Naive thymus-derived CD4-positive, alpha-beta T cell (primary cell): ENCODE measurements at regions of chr12 and their contacts with region 1.

Region 1: DNA sequence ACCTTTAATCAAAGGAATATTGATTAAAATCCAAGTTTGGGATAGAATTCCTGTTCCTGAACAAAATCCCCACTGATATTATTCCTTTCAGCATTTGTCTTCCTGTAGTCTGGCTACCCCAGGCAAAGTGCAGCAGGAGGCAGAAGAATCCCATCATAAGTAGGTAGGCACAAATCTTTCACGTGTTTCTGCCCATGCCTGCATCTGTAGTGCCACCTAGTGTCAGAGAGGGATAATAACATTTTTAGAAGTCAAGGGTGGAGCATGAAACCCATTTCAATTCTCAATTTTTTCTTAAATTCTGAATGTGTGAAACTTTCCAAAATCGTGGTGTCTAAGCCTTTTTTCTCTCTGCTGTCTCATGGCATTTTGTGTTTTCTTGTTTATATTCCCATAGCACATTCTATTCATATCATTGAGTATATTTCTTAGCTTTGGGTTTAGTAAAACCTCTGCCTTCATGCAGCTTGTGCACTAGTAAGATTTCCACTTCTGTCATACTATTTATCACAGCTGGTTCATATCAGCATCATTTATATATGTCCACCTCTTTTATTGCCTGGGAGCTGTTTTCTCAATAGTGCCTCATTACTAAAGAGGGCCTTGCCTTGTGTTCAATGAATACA is 47.8 kb upstream of the RERG start:
- DNase-seq: peak in 7 of 9 donors; percentile 28 to 65 (median 56)
- ATAC-seq: peak; percentile 79
- H3K4me3 ChIP-seq: no peak overlapping the region
- H3K4me3 Mint-ChIP-seq: no peak overlapping the region
- H3K27ac ChIP-seq: no peak overlapping the region
- H3K27ac Mint-ChIP-seq: no peak overlapping the region
- H3K4me1 ChIP-seq: no peaks in the 10 kb centered on the region
- H3K4me1 Mint-ChIP-seq: no peaks in the 10 kb centered on the region
- H3K27me3 ChIP-seq: no peaks in the 10 kb centered on the region
- H3K27me3 Mint-ChIP-seq: peaks cover 2 to 11% (median 5%) of the 10 kb centered on the region in 5 donors

Region 2: GRCh38 chr12:14723763-14724162 is 545.3 kb before region 1 on chr12:
- CTCF ChIA-PET with region 1: interaction called, 12 read pairs
- POLR2A ChIA-PET with region 1: no interaction called
- intact Hi-C with region 1: loop called (anchors 1 kb)
- DNase-seq: peak; percentile 19 to 67 (median 59)
- ATAC-seq: peak; percentile 83
- H3K4me3 ChIP-seq: no peak overlapping the region
- H3K4me3 Mint-ChIP-seq: no peak overlapping the region
- H3K27ac ChIP-seq: no peak overlapping the region
- H3K27ac Mint-ChIP-seq: no peak overlapping the region
- H3K4me1 ChIP-seq: no peaks in the 10 kb centered on the region
- H3K4me1 Mint-ChIP-seq: peaks cover 0 to 4% (median 0%) of the 10 kb centered on the region in 7 donors
- H3K27me3 ChIP-seq: no peaks in the 10 kb centered on the region
- H3K27me3 Mint-ChIP-seq: peaks cover 0 to 34% (median 10%) of the 10 kb centered on the region in 5 donors

Region 3: DNA sequence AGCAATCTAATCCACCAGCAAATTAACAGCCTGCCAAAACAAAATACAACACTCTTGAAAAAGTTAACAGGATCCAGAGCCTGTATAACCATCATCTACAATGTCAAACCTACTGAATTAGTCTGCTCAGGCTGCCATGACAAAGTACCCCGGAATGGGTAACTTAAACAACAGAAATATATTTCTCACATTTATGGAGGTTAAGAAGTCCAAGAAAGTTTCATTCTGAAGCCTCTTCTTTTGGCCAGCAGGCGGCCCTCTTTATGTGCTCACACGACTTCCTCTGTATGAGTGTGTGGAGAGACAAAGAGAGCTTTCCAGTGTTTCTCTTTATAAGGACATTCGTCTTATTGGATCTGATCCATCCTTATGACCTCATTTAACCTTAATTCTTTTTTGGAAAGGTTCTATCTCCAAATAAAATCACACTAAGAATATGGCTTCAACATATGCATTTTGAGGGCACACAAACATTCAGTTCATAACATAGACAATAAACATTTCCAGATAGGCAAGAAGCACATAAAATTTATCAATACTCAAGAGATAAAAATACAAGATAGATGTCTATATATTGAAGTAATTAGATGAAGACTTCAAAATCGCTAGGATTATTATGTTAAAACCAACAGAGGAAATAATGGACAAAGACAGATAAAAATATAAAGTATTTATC is 41.9 kb before region 1 on chr12:
- CTCF ChIA-PET with region 1: no interaction called
- POLR2A ChIA-PET with region 1: no interaction called
- intact Hi-C with region 1: loop called (anchors 1 to 2 kb)
- DNase-seq: peak in 4 of 9 donors; percentile 10 to 25 (median 20)
- ATAC-seq: peak; percentile 53
- H3K4me3 ChIP-seq: no peak overlapping the region
- H3K4me3 Mint-ChIP-seq: no peak overlapping the region
- H3K27ac ChIP-seq: no peak overlapping the region
- H3K27ac Mint-ChIP-seq: no peak overlapping the region
- H3K4me1 ChIP-seq: no peaks in the 10 kb centered on the region
- H3K4me1 Mint-ChIP-seq: peaks cover 0 to 5% (median 0%) of the 10 kb centered on the region in 7 donors
- H3K27me3 ChIP-seq: no peaks in the 10 kb centered on the region
- H3K27me3 Mint-ChIP-seq: peaks cover 46 to 58% (median 50%) of the 10 kb centered on the region in 5 donors

Region 4: DNA sequence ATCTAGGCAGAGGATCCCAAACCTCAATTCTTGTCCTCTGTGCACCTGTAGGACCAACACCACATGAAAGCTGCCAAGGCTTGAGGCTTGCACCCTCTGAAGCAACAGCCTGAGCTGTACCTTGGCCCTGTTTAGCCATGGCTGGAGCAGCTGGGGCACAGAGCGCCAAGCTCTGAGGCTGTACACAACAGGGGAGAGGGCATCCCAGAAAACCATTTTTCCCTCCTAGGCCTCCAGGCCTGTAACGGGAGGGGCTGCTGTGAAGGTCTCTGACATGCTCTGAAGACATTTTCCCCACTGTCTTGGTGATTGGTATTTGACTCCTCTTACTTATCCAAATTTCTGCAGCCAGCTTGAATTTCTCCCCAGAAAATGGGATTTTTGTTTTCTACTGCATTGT is 30.9 kb after region 1 on chr12:
- CTCF ChIA-PET with region 1: no interaction called
- POLR2A ChIA-PET with region 1: no interaction called
- intact Hi-C with region 1: no loop called
- DNase-seq: no peak
- ATAC-seq: no peak
- H3K4me3 ChIP-seq: no peak overlapping the region
- H3K4me3 Mint-ChIP-seq: no peak overlapping the region
- H3K27ac ChIP-seq: no peak overlapping the region
- H3K27ac Mint-ChIP-seq: no peak overlapping the region
- H3K4me1 ChIP-seq: no peaks in the 10 kb centered on the region
- H3K4me1 Mint-ChIP-seq: no peaks in the 10 kb centered on the region
- H3K27me3 ChIP-seq: no peaks in the 10 kb centered on the region
- H3K27me3 Mint-ChIP-seq: peaks cover 8 to 39% (median 16%) of the 10 kb centered on the region in 5 donors

Region 5: DNA sequence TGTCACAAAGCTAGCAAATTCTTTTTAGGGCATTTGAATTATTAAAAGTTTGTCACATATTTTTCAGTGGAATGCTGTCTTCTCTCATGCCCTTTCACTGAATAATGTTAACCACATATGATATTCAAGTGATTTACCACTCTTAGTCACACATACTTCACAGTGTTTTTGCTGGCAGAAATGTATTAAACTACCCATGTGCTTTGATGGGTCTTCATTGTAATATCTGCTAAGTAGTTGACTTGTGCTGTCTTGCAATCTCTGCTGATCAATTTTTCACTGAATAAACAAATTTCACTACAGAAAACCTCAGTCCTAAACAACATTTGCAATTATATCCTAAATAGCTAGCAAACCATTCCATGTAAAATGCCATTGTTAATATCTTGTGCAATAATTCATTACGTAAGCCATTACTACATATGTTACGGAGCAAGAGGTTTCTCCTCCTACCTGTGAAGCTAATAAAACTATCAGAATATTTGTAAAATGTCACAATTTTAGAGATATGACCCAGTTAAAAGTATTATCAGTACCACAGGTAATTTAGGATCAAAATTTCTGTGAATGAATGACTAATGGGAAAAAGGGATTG is 1401.5 kb after region 1 on chr12:
- CTCF ChIA-PET with region 1: no interaction called
- POLR2A ChIA-PET with region 1: no interaction called
- intact Hi-C with region 1: no loop called
- DNase-seq: no peak
- ATAC-seq: no peak
- H3K4me3 ChIP-seq: no peak overlapping the region
- H3K4me3 Mint-ChIP-seq: no peak overlapping the region
- H3K27ac ChIP-seq: no peak overlapping the region
- H3K27ac Mint-ChIP-seq: no peak overlapping the region
- H3K4me1 ChIP-seq: no peaks in the 10 kb centered on the region
- H3K4me1 Mint-ChIP-seq: no peaks in the 10 kb centered on the region
- H3K27me3 ChIP-seq: no peaks in the 10 kb centered on the region
- H3K27me3 Mint-ChIP-seq: no peaks in the 10 kb centered on the region